Caco-2 (cell line): ENCODE measurements at regions of chr15 and their contacts with region 1.

Region 1: DNA sequence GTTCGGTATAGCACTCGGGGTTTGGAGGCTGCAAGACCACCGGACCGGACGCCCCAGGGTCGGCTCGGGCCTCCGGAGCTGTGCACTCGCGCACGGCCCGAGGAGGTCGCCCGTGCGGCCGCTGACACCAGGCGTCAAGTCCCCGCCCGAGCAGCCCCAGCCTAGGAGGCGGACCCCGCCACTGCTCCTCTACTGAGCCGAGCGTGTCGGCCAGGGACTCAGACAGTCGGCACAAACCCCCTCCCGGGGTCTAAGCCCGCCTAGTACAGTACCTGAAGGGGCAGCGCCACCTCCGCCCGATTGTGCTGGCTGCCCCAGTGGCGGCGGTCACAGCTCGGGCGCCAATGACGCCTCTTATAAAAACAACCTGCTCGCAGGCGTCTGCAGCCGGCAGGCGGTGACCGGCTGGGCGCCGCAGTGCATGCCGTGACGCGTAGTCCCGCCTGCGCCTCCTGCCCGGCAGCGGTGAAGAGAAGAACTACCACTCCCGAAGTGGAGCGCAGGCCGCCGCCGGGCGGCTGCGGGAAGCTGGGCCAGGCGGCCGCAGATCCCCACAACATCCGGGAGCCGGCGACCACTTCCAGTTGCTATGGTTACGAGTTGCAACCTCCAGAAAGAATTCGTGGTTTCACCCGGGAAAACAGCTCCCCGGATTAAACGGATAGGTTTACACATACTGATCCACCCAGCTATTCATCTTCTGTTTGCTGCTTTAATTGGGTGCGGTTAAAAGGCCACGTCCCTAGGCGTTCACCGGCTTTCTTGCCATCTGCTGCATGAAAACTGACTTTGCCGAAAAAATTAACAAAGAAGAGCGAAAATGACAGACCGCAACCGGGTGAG is at the starts of genes CCPG1 and PIERCE2:
- DNase-seq: peak; percentile 91 to 95
- H3K4me3 ChIP-seq: peak within 1 kb of the TSS; percentile 59
- H3K4me3 Mint-ChIP-seq: peak within 1 kb of the TSS; percentile 91
- H3K27ac Mint-ChIP-seq: peak within 1 kb of the TSS; percentile 85
- H3K4me1 ChIP-seq: peaks cover 12% of the 10 kb centered on the region
- H3K4me1 Mint-ChIP-seq: peaks cover 7% of the 10 kb centered on the region
- H3K27me3 ChIP-seq: no peaks in the 10 kb centered on the region
- H3K27me3 Mint-ChIP-seq: no peaks in the 10 kb centered on the region
- CTCF ChIP-seq: peak; percentile 68 to 78
- total RNA-seq, gene CCPG1: 51.6 and 54.6 TPM in 2 replicates
- total RNA-seq, gene PIERCE2: 1.3 TPM in 1 of 2 replicates, not detected in the other

Region 2: DNA sequence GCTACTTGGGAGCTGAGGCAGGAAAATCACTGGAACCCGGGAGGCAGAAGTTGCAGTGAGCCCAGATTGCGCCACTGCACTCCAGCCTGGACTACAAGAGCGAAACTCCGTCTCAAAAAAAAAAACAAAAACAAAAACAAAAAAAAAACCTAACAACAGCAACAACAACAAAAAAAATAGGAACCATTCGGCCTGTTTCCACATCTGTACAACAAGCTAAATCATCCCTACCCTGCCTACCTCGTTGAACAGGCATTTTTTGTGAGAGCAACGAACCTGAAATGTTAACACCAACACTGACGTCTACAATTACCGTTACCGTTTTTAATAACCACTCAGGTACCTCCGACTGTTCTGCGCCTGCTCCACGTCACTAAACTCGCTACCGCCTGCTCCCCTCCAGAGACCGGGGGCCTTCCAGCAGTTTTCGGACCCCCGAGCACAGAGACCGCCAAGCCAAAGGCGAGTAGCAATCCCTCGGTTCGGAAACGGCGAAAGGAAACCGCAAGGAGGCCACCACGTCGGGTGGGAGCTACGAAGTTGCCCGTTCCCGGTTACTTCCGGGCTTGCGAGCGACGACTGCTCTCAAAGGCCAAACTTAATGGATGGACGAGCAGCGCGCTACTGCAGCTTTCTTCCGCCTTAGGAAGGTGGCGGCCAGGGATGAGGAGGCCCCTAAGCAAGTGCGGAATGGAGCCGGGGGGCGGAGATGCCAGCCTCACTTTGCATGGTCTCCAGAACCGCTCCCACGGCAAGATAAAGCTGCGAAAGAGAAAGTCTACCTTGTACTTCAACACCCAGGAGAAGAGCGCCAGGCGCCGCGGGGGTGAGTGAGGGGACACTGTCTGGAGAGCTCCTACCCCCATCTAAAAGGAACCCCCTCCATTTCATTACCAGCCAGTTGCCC is 89.3 kb before region 1 on chr15 and contains the starts of genes PIGB and PIGBOS1:
- CTCF ChIA-PET with region 1: no interaction called
- POLR2A ChIA-PET with region 1: interaction called, 8 read pairs
- intact Hi-C with region 1: loop called (anchors 1 kb)
- DNase-seq: peak; percentile 86 to 89
- H3K4me3 ChIP-seq: peak within 1 kb of the TSS; percentile 64
- H3K4me3 Mint-ChIP-seq: peak within 1 kb of the TSS; percentile 75
- H3K27ac Mint-ChIP-seq: peak within 1 kb of the TSS; percentile 94
- H3K4me1 ChIP-seq: no peaks in the 10 kb centered on the region
- H3K4me1 Mint-ChIP-seq: peaks cover 6% of the 10 kb centered on the region
- H3K27me3 ChIP-seq: no peaks in the 10 kb centered on the region
- H3K27me3 Mint-ChIP-seq: no peaks in the 10 kb centered on the region
- CTCF ChIP-seq: peak in 1 of 2 experiments; percentile 16
- total RNA-seq, gene PIGB: 14.1 and 15.5 TPM in 2 replicates
- total RNA-seq, gene PIGBOS1: 10.9 and 11.7 TPM in 2 replicates